Right ventricle myocardium inferior (tissue), 1 donor: ENCODE measurements at regions of chr13 and their contacts with region 1.

Region 1: GRCh38 chr13:21297914-21298831 is 121.7 kb downstream of the MRPL57 start:
- DNase-seq: peak; percentile 93
- ATAC-seq: peak; percentile 100

Region 2: GRCh38 chr13:20387441-20387971 is 910.7 kb before region 1 on chr13:
- intact Hi-C with region 1: no loop called
- DNase-seq: no peak
- ATAC-seq: no peak

Region 3: GRCh38 chr13:21458813-21459701 is 160.9 kb after region 1 on chr13 and contains the start of gene ZDHHC20:
- intact Hi-C with region 1: loop called (anchors 1 kb)
- DNase-seq: peak; percentile 96
- ATAC-seq: peak; percentile 98
- total RNA-seq, gene ZDHHC20: 14.6 TPM